ENCODE measurements at regions of chr9 and their contacts with region 1.

Region 1: GRCh38 chr9:91837981-91838731 is 111.9 kb downstream of the ROR2 start:
- DNase-seq: no peak
- H3K4me3 ChIP-seq: peak overlapping the region; percentile 14 to 41
- H3K27ac ChIP-seq: peak overlapping the region; percentile 76
- H3K4me1 ChIP-seq: peaks cover 59% of the 10 kb centered on the region
- H3K27me3 ChIP-seq: no peaks in the 10 kb centered on the region
- CTCF ChIP-seq: no peak
- POLR2A ChIP-seq: no peak

Region 2: DNA sequence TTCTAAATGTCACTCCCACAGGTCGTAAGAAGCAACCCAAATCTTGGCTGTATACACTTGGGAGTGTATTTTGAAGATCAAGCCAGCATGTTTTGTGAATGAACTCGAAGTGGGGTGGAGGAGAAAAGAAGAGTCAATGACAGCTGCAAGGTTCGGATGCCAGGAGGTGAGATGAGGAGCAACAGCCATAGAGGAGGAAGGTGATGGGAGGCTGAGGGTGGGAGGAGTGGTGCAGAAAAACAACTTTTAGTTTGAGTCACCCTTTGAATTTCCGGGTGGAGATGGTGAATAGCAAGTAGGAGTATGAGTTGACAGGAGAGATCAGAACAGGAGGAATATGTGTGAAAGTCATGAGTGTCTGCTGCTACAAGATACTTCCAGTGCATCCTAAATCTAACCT is 1349.1 kb before region 1 on chr9:
- intact Hi-C with region 1: loop called (anchors 5 kb)
- DNase-seq: no peak
- H3K4me3 ChIP-seq: no peak overlapping the region
- H3K27ac ChIP-seq: no peak overlapping the region
- H3K4me1 ChIP-seq: no peaks in the 10 kb centered on the region
- H3K27me3 ChIP-seq: no peaks in the 10 kb centered on the region
- CTCF ChIP-seq: no peak
- POLR2A ChIP-seq: no peak

Measured in vagina (tissue), 2 donors.